ENCODE measurements at regions of chr5 and their contacts with region 1.

Region 1: GRCh38 chr5:42994246-42995151 is 45.6 kb downstream of the ANXA2R start:
- DNase-seq: peak; percentile 93
- ATAC-seq: peak; percentile 67
- H3K4me3 Mint-ChIP-seq: peak overlapping the region; percentile 98
- H3K27ac Mint-ChIP-seq: peak overlapping the region; percentile 100
- H3K4me1 Mint-ChIP-seq: peaks cover 25% of the 10 kb centered on the region
- H3K27me3 Mint-ChIP-seq: no peaks in the 10 kb centered on the region

Region 2: DNA sequence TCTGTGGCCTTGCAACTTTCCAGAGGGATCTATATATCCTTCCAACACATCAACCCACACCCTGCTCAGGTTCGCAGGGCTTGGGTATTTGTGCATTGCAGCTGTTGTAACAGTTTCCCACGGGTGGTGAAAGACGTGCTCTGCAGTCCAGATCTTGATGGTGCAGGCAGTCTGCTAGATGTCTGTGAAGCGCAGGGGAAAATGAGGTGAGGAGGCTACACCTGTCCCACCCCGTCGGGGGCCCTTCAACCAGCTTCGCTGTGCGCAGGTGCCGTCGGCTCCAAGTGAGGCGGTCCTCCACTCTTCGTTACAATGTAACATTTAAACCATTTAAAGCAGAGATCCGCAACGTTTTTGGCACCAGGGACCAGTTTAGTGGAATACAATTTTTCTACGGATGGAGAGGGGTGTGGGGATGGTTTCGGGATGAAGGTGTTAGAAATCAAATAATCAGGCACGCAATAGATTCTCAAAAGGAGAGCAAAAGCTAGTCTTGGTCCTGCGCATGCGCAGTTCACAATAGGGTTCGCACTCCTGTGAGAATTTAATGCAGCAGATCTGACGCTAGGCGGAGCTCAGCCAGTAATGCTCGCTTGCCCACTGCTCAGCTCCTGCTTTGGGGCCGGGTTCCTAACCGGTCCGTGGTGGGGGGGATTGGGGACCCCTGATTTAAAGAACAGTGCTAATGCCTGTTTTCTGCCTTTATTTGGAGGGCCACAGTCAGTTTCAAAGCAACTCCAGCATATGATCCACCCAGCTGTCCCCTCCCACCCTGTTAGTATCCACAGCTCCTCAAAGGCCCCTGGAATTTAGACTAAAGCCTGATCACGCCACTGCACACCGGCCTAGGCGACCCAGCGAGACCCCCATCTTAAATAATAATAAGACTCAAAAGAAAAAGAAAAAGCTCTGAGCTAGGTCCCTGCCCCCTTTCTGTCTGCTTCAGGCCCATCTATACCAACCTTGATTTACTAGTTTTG is 85.7 kb before region 1 on chr5:
- CTCF ChIA-PET with region 1: interaction called, 23 read pairs
- POLR2A ChIA-PET with region 1: interaction called, 5 read pairs
- intact Hi-C with region 1: loop called (anchors 2 kb)
- DNase-seq: peak; percentile 95
- ATAC-seq: peak; percentile 95
- H3K4me3 Mint-ChIP-seq: peak overlapping the region; percentile 75
- H3K27ac Mint-ChIP-seq: peak overlapping the region; percentile 48
- H3K4me1 Mint-ChIP-seq: peaks cover 14% of the 10 kb centered on the region
- H3K27me3 Mint-ChIP-seq: peaks cover 8% of the 10 kb centered on the region

Region 3: DNA sequence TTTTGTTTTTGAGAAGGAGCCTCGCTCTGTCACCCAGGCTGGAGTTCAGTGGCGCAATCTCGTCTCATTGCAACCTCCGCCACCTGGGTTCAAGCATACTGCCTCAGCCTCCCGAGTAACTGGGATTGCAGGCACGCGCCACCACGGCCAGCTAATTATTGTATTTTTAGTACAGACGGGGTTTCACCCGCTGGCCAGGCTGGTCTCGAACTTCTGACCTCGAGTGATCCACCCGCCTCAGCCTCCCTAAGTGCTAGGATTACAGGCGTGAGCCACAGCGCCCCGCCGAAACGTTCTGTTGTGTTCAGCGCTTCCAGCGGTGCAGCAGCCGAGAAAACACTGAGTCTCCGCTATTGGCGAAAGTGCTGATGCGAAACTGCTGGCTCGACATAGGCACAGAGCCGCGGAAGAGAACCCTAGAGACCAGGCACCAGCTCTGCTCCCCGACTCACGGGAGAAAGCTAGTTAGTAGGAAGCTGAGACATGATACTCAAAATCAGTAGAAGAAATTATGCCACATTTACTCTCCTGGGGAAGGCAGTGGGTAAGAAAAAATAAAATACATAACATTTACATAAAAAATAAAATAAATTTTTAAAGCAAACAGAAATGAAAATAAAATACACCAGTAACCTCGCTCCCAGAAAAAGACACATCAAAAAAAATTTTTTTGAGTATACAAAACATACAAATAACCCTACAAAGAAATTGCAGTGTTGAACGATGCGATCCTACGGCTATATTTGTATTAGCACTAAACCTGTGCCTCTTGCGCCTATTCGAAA is 14.1 kb after region 1 on chr5:
- CTCF ChIA-PET with region 1: interaction called, 72 read pairs
- POLR2A ChIA-PET with region 1: interaction called, 11 read pairs
- intact Hi-C with region 1: loop called (anchors 1 kb)
- DNase-seq: peak; percentile 94
- ATAC-seq: peak; percentile 64
- H3K4me3 Mint-ChIP-seq: peak overlapping the region; percentile 76
- H3K27ac Mint-ChIP-seq: peak overlapping the region; percentile 94
- H3K4me1 Mint-ChIP-seq: peaks cover 21% of the 10 kb centered on the region
- H3K27me3 Mint-ChIP-seq: no peaks in the 10 kb centered on the region

Region 4: GRCh38 chr5:43073597-43074546 is 79.4 kb after region 1 on chr5:
- CTCF ChIA-PET with region 1: no interaction called
- POLR2A ChIA-PET with region 1: no interaction called
- intact Hi-C with region 1: no loop called
- DNase-seq: peak; percentile 69
- ATAC-seq: peak; percentile 78
- H3K4me3 Mint-ChIP-seq: no peak overlapping the region
- H3K27ac Mint-ChIP-seq: no peak overlapping the region
- H3K4me1 Mint-ChIP-seq: peaks cover 38% of the 10 kb centered on the region
- H3K27me3 Mint-ChIP-seq: no peaks in the 10 kb centered on the region

Region 5: DNA sequence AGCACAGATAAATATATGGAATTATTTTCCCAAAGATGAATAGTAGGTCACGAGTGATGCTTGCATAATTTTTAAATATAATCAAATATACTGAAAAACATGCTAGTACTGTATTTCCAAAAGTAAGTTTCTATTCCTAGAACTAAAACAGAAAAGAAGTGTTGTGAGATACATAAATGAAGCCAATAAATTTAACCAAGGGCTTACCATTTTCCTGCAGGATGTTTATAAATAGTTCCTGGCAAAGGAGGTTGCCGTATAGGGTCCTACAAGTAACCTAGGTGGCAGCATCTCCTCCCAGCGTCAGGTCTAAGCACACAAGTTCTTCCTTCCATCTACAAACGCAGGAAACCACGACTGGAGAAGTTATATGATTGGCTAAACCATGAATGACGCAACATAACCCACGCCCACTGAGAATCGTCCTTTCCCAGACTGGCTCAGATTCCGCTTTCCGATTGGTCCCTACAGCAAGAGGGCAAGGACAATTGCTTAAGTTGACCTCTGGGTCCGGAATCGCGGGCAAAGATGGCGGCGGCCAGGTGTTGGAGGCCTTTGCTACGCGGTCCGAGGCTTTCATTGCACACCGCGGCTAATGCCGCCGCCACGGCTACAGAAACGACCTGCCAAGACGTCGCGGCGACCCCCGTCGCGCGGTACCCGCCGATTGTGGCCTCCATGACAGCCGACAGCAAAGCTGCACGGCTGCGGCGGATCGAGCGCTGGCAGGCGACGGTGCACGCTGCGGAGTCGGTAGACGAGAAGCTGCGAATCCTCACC is 1814.1 kb after region 1 on chr5 and contains the start of gene MRPS30:
- CTCF ChIA-PET with region 1: no interaction called
- POLR2A ChIA-PET with region 1: no interaction called
- intact Hi-C with region 1: loop called in 1 of 2 experiments (anchors 5 kb)
- DNase-seq: peak; percentile 93
- ATAC-seq: peak; percentile 96
- H3K4me3 Mint-ChIP-seq: peak within 1 kb of the TSS; percentile 91
- H3K27ac Mint-ChIP-seq: peak within 1 kb of the TSS; percentile 98
- H3K4me1 Mint-ChIP-seq: peaks cover 27% of the 10 kb centered on the region
- H3K27me3 Mint-ChIP-seq: no peaks in the 10 kb centered on the region
- total RNA-seq, gene MRPS30: 59.7 to 73.3 TPM